AG04450 (cell line): ENCODE measurements at regions of chr1 and their contacts with region 1.

Region 1: DNA sequence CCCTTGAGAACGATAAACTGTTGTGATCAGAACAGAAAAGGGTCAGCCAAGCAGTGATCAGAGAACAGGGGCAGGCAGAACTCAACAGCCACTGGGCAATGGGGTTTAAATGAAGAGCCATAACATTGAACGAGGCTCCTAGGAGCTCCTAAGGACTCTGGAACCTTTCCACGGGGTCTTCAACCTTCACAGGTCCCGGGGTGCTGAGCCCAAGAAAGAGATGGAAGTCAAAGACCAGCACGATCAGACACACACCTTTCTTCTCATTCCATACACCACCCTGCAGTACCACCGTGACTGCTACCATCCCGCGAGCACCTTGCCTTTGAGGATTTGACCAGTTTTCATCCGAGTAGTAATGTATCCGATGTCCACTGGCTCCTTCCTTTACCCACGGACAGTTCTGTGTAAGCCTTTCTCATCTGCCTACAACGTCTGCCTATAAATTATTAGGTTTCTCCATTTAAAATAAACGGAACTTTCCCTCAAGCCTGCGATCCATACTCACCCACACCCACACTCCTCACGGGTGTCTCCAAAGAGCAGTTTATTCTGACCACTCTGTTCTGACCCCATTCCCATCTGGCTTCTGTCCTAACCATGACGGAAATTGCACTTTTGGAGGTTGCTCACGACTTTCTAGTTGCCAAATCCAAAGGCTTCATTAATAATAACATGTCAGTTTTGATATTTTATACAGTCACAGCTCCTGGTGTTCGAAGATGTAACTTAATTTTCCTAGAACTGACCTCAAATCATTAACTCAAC is 16.8 kb upstream of the HHAT start:
- DNase-seq: no peak
- H3K4me3 ChIP-seq: no peak overlapping the region; the same call in 1 of the 2 replicates
- H3K27ac ChIP-seq: no peak overlapping the region
- H3K27me3 ChIP-seq: peaks cover 14% of the 10 kb centered on the region
- CTCF ChIP-seq: no peak

Region 2: DNA sequence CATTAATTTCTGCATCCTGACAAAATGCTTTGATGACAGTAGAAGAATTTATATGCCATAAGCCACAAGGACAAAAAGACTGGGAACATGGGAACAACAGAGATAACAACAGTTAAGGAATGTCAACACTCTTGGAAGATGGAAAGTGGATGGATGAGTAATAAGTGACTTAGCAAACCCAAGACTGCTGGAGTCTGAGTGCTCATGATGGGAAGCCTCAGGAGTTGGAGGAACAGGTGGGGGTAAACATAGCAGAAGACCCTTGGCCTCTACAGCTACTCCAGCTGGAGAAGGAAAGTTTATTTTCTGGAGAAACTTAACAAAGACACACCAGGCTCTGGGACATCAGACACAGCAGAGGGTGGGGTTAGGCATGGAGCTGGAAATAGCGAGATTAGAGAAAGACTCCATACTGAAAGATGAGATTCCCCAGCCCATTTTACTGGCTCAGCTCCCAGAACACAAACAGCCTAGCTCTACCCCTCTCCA is 623.1 kb before region 1 on chr1:
- CTCF ChIA-PET with region 1: no interaction called
- POLR2A ChIA-PET with region 1: no interaction called
- DNase-seq: peak; percentile 16
- H3K4me3 ChIP-seq: no peak overlapping the region
- H3K27ac ChIP-seq: no peak overlapping the region
- H3K27me3 ChIP-seq: no peaks in the 10 kb centered on the region
- CTCF ChIP-seq: no peak

Region 3: GRCh38 chr1:210143465-210144062 is 168.3 kb before region 1 on chr1:
- CTCF ChIA-PET with region 1: interaction called, 121 read pairs
- POLR2A ChIA-PET with region 1: no interaction called
- DNase-seq: peak; percentile 51
- H3K4me3 ChIP-seq: no peak overlapping the region
- H3K27ac ChIP-seq: no peak overlapping the region
- H3K27me3 ChIP-seq: no peaks in the 10 kb centered on the region
- CTCF ChIP-seq: peak; percentile 66

Region 4: DNA sequence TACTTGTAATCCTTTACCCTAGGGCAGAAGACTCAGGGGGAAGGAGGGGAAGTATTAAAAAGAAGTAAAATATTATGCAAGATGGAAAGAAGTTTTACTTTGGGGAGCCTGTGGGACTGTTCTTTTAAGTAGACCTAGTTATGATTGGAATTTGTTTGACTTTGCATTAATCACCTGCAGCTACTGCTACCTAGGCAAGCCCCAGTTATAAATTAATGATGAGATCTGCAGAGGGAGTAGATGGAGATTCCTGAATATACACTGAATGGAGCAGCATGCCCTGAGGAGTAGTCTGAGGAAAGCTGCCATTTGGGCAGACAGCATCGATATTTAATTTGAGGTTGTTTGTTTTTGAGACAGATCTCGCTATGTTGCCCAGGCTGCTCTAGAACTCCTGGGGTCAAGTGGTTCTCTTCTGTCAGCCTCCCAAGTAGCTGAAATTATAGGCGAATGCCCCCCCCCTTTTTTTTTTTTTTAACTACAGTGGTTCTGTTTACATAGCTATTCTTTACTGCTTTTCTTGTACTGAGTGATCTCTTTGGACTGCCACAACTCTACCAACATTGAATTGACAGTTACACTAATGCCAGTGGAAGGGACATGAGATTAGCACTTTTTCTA is 160.7 kb before region 1 on chr1:
- CTCF ChIA-PET with region 1: interaction called, 12 read pairs
- POLR2A ChIA-PET with region 1: no interaction called
- DNase-seq: no peak
- H3K4me3 ChIP-seq: no peak overlapping the region
- H3K27ac ChIP-seq: no peak overlapping the region
- H3K27me3 ChIP-seq: no peaks in the 10 kb centered on the region
- CTCF ChIP-seq: no peak

Region 5: GRCh38 chr1:210200124-210200736 is 111.7 kb before region 1 on chr1:
- CTCF ChIA-PET with region 1: interaction called, 15 read pairs
- POLR2A ChIA-PET with region 1: no interaction called
- DNase-seq: no peak
- H3K4me3 ChIP-seq: no peak overlapping the region
- H3K27ac ChIP-seq: no peak overlapping the region
- H3K27me3 ChIP-seq: no peaks in the 10 kb centered on the region
- CTCF ChIP-seq: no peak

Region 6: DNA sequence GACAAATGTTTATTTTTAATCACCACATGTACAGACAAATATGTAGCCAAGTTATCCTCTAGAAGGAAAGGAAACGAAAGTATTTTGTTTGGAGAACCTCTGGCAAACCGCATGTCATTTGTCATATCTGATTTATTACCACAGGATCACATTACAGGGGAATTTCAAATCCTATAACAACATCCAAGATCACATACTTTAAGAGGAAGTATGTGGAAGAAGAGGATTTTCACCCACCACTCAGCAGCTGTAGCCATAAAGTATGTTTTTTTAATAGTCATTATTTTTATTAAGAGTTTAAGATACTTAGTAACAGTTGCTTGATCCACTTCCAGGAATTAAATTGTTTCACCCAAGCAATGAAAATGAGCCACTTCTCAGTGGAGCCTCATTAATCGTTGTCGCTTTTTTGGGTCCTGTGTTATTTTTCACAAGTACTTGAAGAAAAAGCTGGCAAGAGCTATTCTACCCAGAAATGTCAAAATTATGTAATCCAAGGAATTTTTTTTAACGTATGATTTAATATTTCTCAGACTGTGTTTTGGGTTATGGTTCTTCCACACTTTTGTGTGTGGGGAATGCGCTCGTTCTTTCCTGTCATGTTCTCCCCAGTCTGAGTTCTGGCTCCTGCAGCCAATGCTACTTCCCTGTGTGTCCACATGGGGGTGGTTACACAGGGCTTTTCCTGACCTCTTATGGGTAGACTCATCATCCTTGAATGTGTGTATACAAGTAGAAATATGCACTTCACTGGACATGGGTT is 72.4 kb before region 1 on chr1:
- CTCF ChIA-PET with region 1: interaction called, 11 read pairs
- POLR2A ChIA-PET with region 1: no interaction called
- DNase-seq: peak; percentile 84
- H3K4me3 ChIP-seq: no peak overlapping the region
- H3K27ac ChIP-seq: no peak overlapping the region
- H3K27me3 ChIP-seq: peaks cover under 1% of the 10 kb centered on the region
- CTCF ChIP-seq: peak; percentile 76

Region 7: GRCh38 chr1:210259561-210259960 is 52.3 kb before region 1 on chr1:
- CTCF ChIA-PET with region 1: interaction called, 11 read pairs
- POLR2A ChIA-PET with region 1: no interaction called
- DNase-seq: peak; percentile 32
- H3K4me3 ChIP-seq: no peak overlapping the region
- H3K27ac ChIP-seq: no peak overlapping the region
- H3K27me3 ChIP-seq: peaks cover 20% of the 10 kb centered on the region
- CTCF ChIP-seq: no peak

Region 8: GRCh38 chr1:210301615-210302000 is 10.3 kb before region 1 on chr1:
- CTCF ChIA-PET with region 1: interaction called, 12 read pairs
- POLR2A ChIA-PET with region 1: no interaction called
- DNase-seq: peak; percentile 7
- H3K4me3 ChIP-seq: no peak overlapping the region
- H3K27ac ChIP-seq: no peak overlapping the region
- H3K27me3 ChIP-seq: peaks cover 44% of the 10 kb centered on the region
- CTCF ChIP-seq: no peak